Transverse colon (tissue), 4 donors: ENCODE measurements at regions of chr4 and their contacts with region 1.

Region 1: GRCh38 chr4:32589853-32590252 is 1869.7 kb downstream of the PCDH7 start:
- DNase-seq: no peak
- H3K4me3 ChIP-seq: no peak overlapping the region
- H3K27ac ChIP-seq: no peak overlapping the region
- H3K4me1 ChIP-seq: no peaks in the 10 kb centered on the region
- H3K27me3 ChIP-seq: no peaks in the 10 kb centered on the region
- CTCF ChIP-seq: no peak
- EP300 ChIP-seq: no peak
- POLR2A ChIP-seq: no peak

Region 2: DNA sequence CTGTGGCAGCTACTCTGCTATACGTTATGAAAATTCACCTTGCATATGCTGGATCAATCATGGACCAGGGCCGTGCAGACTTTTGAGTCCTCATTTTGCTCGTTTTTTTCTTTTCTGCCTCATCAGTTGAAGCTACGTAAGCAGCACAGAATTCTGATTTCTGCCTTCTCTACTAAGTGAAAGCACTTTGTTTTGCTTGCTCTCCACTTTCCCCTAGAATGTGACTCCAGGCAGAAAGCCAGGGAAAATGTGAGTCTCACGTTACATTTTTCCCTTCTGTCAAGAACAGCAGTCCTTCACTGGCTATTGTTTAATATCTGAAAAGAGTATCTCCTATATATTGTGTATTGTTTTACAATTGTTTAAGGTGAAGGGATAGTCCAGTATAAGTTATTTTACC is 29.5 kb before region 1 on chr4:
- in situ Hi-C with region 1: no loop called
- intact Hi-C with region 1: loop called (anchors 1 kb)
- DNase-seq: no peak
- H3K4me3 ChIP-seq: no peak overlapping the region
- H3K27ac ChIP-seq: no peak overlapping the region
- H3K4me1 ChIP-seq: no peaks in the 10 kb centered on the region
- H3K27me3 ChIP-seq: no peaks in the 10 kb centered on the region
- CTCF ChIP-seq: no peak
- EP300 ChIP-seq: no peak
- POLR2A ChIP-seq: no peak

Region 3: DNA sequence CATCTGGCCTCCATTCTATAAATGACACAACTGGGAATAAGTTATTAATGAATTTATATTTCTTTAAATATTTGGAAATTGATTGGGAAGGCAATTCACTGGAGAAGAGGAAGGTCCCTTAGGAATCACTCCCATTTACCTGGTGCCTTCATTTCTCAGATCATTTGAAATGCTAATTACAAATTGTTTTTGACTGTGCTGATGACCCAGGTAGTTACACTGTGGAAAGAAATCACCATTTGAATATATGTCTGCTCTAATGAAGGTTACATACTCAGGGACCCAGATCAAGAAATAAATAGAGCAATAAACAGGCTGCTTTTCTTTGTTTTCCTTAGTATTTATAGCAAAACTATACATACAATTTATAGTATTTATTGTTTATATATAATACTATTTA is 1895.4 kb after region 1 on chr4:
- in situ Hi-C with region 1: no loop called
- intact Hi-C with region 1: no loop called
- DNase-seq: no peak
- H3K4me3 ChIP-seq: no peak overlapping the region
- H3K27ac ChIP-seq: no peak overlapping the region
- H3K4me1 ChIP-seq: no peaks in the 10 kb centered on the region
- H3K27me3 ChIP-seq: no peaks in the 10 kb centered on the region
- CTCF ChIP-seq: no peak
- EP300 ChIP-seq: no peak
- POLR2A ChIP-seq: no peak